ENCODE measurements at regions of chr20 and their contacts with region 1.

Region 1: DNA sequence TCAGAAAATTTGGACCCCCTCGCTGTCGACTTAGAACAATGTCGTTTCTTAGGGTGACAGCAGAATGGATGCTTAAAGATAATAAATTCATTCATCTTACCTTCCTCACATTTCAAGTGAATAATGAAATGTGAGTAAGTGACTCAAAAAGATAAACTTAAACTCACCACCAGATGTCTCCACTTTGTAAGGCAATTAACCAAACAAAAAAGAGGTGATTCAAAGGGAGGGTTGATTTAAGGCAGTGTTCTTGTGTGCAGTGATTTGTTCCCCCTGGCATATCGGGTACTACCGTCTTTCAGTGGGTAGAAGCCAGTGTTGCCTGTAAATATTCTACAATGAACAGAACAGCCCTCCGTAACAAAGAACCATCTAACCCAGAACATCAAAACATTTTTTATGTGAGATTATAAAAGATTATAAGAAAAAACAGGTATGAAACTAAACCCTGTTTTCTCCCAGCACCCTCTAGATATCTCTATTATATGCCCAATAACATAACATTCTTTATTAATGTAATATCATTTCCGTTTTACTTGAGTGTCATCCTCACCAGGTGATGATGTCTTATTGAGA is 589.7 kb downstream of the CBLN4 start:
- DNase-seq: no peak
- H3K4me3 ChIP-seq: no peak overlapping the region
- H3K27ac ChIP-seq: no peak overlapping the region
- H3K4me1 ChIP-seq: no peaks in the 10 kb centered on the region
- H3K27me3 ChIP-seq: no peaks in the 10 kb centered on the region
- CTCF ChIP-seq: peak in 5 of 6 experiments; percentile 28 to 55 (median 46)
- POLR2A ChIP-seq: no peak

Region 2: GRCh38 chr20:55264703-55265239 is 150.9 kb before region 1 on chr20:
- intact Hi-C with region 1: no loop called
- DNase-seq: no peak
- H3K4me3 ChIP-seq: no peak overlapping the region
- H3K27ac ChIP-seq: no peak overlapping the region
- H3K4me1 ChIP-seq: no peaks in the 10 kb centered on the region
- H3K27me3 ChIP-seq: no peaks in the 10 kb centered on the region
- CTCF ChIP-seq: no peak
- POLR2A ChIP-seq: no peak

Region 3: GRCh38 chr20:55360895-55361294 is 54.8 kb before region 1 on chr20:
- intact Hi-C with region 1: no loop called
- DNase-seq: no peak
- H3K4me3 ChIP-seq: no peak overlapping the region
- H3K27ac ChIP-seq: no peak overlapping the region
- H3K4me1 ChIP-seq: no peaks in the 10 kb centered on the region
- H3K27me3 ChIP-seq: no peaks in the 10 kb centered on the region
- CTCF ChIP-seq: no peak
- POLR2A ChIP-seq: no peak

Region 4: DNA sequence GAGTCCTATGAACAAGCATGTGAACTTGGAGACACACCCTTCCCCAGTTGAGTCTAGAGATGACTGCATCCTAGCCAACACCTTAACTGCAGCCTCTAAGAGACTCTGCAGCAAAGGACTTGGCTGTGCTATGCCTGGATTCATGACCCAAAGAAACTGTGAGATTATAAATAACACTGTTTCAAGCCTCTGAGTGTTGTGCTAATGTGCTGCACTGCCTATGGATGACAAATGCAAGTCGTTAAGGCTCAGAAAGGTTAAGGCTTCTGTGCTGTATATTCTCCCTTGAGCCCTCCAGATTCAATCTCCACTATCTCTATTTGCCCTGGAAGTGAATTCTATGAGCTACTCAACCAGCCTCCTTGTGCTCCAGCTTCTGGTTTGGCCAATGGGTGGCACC is 706.2 kb after region 1 on chr20:
- intact Hi-C with region 1: no loop called
- DNase-seq: no peak
- H3K4me3 ChIP-seq: no peak overlapping the region
- H3K27ac ChIP-seq: no peak overlapping the region
- H3K4me1 ChIP-seq: no peaks in the 10 kb centered on the region
- H3K27me3 ChIP-seq: no peaks in the 10 kb centered on the region
- CTCF ChIP-seq: no peak
- POLR2A ChIP-seq: no peak

Region 5: DNA sequence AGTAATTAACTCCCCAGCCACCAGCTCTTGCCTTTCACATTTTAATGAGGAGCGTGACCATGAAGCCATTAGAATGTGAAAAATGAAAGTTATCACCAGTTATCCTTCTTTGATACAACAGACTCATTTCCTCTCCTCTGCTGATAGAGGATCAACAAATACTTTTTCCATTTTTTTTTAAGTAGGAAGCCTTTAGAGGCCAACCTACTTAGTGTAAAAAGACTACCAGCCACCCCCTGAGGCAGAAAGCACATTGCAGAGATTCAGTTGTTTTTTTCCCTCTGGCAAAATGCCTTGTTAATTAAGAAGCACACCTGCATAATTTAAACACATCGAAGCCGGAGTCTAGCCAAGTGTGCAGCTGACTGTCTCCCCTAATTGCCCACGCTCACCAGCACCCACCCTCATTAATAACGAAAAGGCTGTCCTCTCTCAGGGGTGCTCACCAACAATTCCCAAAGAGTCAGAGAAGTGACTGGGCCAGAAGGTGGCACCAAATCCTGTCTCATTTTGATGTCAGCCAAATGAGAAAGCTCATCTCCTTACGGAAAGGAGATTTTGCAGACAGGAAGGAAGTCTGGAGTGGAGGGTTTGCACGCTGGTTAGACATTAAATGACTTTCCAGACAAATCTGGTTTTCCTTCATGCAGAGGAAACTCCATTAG is 772.0 kb after region 1 on chr20:
- intact Hi-C with region 1: loop called in 1 of 2 experiments (anchors 10 kb)
- DNase-seq: no peak
- H3K4me3 ChIP-seq: no peak overlapping the region
- H3K27ac ChIP-seq: no peak overlapping the region
- H3K4me1 ChIP-seq: no peaks in the 10 kb centered on the region
- H3K27me3 ChIP-seq: no peaks in the 10 kb centered on the region
- CTCF ChIP-seq: peak in 4 of 6 experiments; percentile 8 to 30 (median 18)
- POLR2A ChIP-seq: no peak

Measured in adrenal gland (tissue), 19 donors.